ENCODE measurements at regions of chr4 and their contacts with region 1.

Region 1: DNA sequence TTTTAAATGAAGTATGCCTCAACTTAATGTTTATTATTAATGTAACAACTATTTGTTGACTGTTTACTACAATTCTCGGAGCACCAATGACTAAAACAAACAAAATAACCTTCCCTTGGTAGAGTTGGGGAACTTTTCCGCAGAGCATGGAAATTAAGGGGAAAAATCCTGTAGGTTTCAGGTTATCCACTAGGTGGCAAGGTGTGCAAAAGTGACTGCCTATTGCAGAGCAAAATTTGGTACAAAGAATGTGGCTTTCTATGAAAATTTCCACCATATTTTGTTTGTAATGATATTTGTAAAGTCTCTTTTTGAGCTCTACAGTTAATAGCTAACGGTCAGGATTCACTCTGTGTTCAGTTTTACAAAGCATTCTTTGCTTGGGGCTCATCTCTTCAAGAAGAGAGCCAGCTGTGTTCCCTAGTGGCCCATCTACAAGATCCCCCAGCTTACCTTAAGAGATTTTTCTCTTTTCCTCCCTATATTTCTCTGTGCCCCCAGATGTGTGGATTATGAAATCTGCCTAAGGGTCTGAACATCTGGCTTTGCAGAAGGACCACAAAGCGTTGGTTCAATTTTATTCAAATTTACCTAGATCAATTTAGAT is 61.1 kb downstream of the FBXO8 start:
- DNase-seq: no peak
- H3K4me3 ChIP-seq: no peak overlapping the region
- H3K27ac ChIP-seq: no peak overlapping the region
- H3K27me3 ChIP-seq: peaks cover 14% of the 10 kb centered on the region
- CTCF ChIP-seq: peak; percentile 76

Region 2: DNA sequence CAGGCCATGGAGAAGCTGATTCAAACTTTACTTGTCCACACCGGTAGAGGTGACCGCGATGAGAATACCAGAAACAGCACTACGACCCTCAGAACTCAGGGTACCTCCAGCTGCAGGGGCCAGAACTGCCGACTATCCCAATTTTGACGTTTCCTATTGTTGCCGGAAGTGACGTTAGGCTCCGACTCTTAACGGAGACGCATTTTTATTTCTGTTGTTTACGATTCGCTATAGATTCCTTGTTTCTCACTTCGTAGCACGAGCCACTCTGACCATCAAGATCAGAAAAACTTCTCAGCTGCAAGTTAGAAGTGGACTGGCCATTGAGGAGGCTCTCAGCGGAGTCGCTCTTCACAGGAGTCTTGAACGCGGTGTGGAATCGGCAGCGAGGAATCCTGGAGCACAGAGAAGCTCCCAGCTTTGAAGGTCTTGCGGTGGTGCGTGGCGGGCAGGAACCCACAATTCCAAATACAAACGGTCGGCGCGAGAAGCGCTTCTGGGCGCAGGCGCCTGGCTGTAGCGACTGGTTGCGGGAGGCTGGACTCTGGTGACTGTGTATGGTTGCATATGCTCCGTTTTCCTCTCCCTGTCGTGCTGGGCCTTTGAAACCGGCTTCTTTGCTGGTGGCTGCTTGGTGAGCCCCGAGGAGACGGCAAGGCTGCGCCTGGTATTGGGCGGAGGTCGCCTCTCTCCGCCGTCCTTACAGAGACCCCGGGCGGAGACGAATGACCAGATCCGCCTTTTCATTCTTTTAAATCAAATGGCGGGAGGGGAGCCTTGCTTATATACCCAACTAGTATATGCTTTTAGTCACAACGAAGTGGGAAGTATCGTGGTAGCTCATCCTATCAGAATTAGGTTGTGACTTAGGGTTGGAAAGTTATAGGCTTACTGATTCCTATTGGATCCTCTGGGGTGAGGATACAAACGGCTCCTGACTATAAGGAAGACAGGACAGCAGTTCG is 61.4 kb after region 1 on chr4 and contains the starts of genes CEP44 and FBXO8:
- CTCF ChIA-PET with region 1: interaction called, 11 read pairs
- POLR2A ChIA-PET with region 1: no interaction called
- DNase-seq: peak; percentile 29
- H3K4me3 ChIP-seq: peak within 1 kb of the TSS; percentile 91
- H3K27ac ChIP-seq: peak within 1 kb of the TSS; percentile 96
- H3K27me3 ChIP-seq: no peaks in the 10 kb centered on the region
- CTCF ChIP-seq: no peak
- polyA plus RNA-seq, gene CEP44: 4.5 and 7.4 TPM in 2 replicates
- polyA plus RNA-seq, gene FBXO8: 22.5 and 28.9 TPM in 2 replicates

Region 3: DNA sequence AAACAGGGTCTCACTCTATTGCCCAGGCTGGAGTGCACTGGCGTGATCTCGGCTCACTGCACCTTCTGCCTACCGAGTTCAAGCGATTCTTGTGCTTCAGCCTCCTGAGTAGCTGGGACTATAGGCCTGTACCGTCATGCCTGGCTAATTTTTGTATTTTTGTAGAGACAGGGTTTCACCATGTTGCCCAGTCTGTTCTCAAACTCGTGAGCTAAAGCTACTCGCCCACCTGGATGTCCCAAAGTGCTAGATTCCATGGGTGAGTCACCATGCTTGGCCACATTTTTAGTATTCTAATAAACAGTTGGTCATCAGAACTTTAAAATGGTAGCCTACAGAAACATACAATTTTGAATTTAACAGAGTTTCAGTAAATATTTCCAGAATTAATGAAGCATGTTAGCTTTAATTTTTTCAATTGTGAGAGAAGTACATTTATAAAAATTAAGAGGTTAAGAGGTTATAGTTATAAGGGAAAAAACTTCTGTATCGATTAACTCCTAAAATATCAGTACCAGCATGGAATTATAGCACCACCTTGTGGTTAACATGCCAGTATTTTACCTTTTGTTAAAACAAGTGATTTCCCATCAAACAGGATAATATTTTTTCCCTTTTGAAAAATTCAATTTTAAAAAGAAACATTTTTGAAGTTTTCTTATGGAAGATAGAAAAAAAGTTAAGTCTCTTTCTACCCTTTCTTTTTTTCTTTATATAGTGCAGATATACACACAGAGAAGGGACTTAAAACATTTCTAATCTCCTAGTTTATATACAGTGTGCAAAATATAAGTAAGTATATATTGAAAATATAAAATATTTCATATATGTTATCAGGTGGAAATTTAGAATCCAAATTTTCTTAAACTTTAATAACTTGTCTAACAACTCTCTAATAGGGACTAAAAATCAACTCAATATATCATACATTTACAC is 96.7 kb after region 1 on chr4:
- CTCF ChIA-PET with region 1: interaction called, 16 read pairs
- POLR2A ChIA-PET with region 1: no interaction called
- DNase-seq: no peak
- H3K4me3 ChIP-seq: no peak overlapping the region
- H3K27ac ChIP-seq: no peak overlapping the region
- H3K27me3 ChIP-seq: no peaks in the 10 kb centered on the region
- CTCF ChIP-seq: peak; percentile 74